ENCODE measurements at regions of chr7 and their contacts with region 1.

Region 1: DNA sequence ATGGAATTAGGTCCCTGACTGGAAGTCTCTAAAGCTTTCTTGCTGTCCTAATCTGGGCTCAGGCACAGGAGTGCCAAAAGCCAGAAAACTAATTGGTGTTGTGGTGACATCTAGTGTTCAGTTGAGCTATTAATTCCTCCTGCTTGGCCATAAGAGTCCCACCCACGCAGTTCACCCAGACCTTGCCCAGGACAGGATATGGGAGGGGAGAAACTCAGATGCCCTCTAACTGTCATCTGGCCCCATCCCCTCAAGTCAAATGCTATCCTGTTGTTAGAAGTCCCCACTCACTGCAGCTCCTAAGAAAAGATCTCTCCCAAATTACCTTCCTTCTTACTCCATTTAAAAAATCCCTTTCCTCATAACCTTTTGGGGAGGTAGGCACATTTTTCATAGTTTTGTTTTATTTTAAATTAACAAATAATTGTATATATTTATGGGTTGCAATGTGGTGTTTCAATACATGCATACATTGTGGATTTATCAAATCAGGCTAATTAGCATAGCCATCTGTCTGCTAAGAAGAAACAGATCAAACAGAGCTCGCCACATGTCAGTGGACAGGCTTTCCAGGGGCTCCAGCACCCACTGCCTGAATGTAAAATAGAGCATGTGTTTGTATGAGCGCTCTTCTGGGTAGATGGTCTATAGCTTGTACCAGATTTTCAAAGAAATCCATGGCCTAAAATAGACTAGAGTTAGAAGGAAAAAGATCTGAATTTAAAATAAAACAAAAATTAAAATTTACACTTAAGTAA is 84.0 kb downstream of the GSAP start:
- DNase-seq: peak in 1 of 2 donors; percentile 57
- H3K4me3 ChIP-seq: no peak overlapping the region
- H3K27ac ChIP-seq: no peak overlapping the region
- H3K4me1 ChIP-seq: peaks cover 6 to 10% of the 10 kb centered on the region in 2 donors
- H3K27me3 ChIP-seq: no peaks in the 10 kb centered on the region
- CTCF ChIP-seq: peak; percentile 22 to 78 (median 62)
- POLR2A ChIP-seq: no peak

Region 2: DNA sequence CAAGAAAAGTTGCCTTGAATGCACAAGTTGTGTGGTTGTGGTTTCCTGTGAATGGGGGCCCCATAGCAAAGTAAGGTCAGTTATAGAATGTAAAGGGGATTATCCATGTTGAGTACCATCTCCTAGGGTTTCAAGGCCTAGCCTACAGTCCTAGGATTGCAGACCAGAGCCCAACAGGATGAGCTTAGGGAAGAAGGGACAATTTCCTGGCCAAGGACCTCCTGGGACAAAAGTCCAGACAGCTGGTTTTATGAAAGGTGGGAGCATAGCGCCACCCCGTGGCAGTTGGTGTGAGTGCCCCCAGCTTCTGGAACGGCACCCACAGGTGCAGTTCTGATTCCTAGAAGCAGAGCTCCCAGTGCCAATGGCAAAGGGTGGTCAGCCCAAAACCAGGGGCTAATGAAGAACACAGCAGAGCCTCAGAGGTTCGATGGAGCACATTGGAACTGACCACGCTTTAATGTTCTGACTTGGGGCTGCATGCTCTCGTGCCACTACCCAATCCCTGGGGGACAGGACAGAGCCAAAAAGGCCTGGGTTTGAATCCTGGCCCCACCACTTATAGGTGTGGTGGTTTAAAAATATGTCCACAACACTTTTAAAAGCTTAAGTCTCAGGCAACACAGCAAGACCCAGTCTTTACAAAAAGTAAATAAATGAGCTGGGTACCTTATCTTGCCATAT is 1311.9 kb before region 1 on chr7:
- intact Hi-C with region 1: loop called (anchors 5 kb)
- DNase-seq: peak; percentile 41 to 73
- H3K4me3 ChIP-seq: no peak overlapping the region
- H3K27ac ChIP-seq: no peak overlapping the region
- H3K4me1 ChIP-seq: no peaks in the 10 kb centered on the region
- H3K27me3 ChIP-seq: no peaks in the 10 kb centered on the region
- CTCF ChIP-seq: peak; percentile 70 to 86 (median 80)
- POLR2A ChIP-seq: no peak

Region 3: DNA sequence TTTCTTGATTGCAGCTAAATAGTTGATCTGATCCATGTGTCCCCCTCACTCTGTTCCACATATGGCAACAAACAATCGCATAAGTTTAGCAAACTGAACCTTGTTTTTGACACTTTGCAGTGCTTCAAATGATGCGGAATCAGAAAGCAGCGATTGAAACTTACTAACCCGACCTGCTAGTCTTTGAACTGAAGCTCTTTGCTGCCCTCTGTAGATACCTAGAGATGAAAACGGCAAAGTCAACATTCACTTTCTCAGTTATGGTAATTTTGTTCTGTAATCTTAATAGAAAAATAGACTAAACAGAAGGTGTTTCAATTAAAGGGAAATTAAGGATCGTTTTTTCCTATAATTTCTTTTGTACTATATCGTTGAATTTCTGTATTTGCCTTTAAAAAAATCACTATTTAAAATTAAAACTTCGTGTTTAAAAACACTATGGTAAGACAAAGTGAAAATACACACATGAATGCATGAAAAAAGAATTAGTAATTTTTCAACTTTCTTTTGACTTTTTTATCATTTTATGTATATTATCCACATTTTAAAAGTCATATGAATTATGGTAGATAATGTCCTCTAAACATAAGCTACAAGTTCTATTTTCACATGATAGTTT is 1844.9 kb after region 1 on chr7:
- intact Hi-C with region 1: no loop called
- DNase-seq: no peak
- H3K4me3 ChIP-seq: no peak overlapping the region
- H3K27ac ChIP-seq: no peak overlapping the region
- H3K4me1 ChIP-seq: no peaks in the 10 kb centered on the region
- H3K27me3 ChIP-seq: no peaks in the 10 kb centered on the region
- CTCF ChIP-seq: peak in 2 of 3 donors; percentile 36 to 57
- POLR2A ChIP-seq: no peak